ENCODE measurements at regions of chr6 and their contacts with region 1.

Region 1: DNA sequence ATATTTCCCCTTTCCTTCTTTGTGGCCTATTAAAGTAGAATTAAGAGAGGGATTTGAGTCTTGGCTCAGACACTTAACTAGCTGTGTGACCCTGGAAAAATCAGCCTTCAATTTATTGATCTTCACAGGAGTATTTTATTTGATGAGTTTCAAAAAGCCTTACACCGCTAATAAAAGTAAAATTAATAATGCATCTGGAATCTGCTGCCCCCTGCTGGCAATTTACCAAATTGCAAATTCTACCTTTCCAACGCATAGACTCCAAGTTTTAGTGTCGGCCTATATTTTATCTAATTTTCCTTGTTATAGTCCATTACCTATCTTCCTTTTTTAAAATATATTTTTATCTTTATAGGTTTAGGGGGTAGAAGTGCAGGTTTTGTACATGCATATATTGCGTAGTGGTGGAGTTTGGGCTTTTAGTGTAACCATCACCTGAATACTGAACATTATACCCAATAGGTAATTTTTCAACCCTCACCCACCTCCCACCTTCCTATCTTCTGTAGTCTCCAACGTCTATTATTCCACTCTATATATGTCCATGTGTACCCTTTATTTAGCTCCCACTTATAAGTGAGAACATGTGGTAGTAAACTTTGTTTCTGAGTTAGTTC is 46.3 kb downstream of the GOPC start:
- DNase-seq: no peak
- H3K4me3 ChIP-seq: no peak overlapping the region
- H3K27ac ChIP-seq: no peak overlapping the region
- H3K27me3 ChIP-seq: no peaks in the 10 kb centered on the region
- CTCF ChIP-seq: peak; percentile 77

Region 2: GRCh38 chr6:117389227-117390057 is 166.5 kb before region 1 on chr6:
- CTCF ChIA-PET with region 1: no interaction called
- POLR2A ChIA-PET with region 1: no interaction called
- DNase-seq: no peak
- H3K4me3 ChIP-seq: no peak overlapping the region
- H3K27ac ChIP-seq: no peak overlapping the region
- H3K27me3 ChIP-seq: no peaks in the 10 kb centered on the region
- CTCF ChIP-seq: no peak

Region 3: DNA sequence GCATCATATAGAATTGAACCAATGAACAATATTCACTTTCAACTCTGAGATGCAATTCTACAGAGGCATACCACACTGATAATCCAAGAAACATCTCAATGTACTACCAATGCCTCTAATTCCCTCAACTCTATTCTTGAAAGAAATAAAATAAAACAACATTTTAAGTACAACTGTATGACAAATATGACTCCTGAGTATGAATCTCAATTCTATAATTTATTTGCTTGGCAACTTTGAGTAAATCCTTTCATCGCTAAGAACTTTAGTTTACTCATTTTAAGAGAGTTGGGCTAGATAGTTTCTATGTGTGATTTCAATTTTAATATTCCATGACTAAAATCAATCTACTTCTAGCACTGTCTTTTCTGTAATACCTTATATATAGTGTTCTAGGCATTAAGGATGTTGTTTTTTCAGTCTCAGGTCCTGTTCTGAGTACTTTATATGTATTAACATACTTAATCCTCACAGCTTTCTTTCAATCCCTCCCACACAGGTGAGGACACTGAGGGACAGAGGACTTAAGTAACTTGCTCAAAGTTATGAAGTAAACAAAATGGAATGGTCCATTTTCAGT is 12.9 kb after region 1 on chr6:
- CTCF ChIA-PET with region 1: interaction called, 34 read pairs
- POLR2A ChIA-PET with region 1: no interaction called
- DNase-seq: no peak
- H3K4me3 ChIP-seq: no peak overlapping the region
- H3K27ac ChIP-seq: no peak overlapping the region
- H3K27me3 ChIP-seq: no peaks in the 10 kb centered on the region
- CTCF ChIP-seq: no peak

Region 4: DNA sequence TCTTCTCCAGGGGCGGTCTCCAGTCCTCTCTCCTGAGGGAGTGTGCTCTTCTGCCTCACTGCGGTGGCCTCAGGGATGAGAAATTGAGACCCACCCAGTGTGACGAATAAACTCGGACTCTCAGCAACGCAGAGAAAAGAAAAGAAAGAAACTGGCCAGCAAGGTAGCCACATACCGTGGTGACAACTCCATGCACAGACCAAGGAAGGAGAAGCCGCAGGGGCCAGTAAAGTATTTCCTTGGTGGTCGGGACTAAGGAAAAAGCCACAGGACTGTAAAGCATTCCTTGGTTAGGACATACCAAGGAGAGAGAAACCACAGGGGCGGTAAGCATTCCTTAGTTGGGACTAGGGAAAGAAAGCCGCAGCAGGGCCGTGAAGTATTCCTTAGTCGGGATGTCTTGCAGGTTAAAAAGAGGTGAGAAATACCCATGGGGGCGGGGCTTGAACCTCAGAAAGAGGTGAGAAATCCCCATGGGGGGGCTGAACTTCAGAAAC is 60.0 kb after region 1 on chr6:
- CTCF ChIA-PET with region 1: no interaction called
- POLR2A ChIA-PET with region 1: no interaction called
- DNase-seq: no peak
- H3K4me3 ChIP-seq: no peak overlapping the region
- H3K27ac ChIP-seq: no peak overlapping the region
- H3K27me3 ChIP-seq: no peaks in the 10 kb centered on the region
- CTCF ChIP-seq: no peak

Measured in AG04450 (cell line).